GM18951 (cell line): ENCODE measurements at regions of chrX and their contacts with region 1.

Region 1: DNA sequence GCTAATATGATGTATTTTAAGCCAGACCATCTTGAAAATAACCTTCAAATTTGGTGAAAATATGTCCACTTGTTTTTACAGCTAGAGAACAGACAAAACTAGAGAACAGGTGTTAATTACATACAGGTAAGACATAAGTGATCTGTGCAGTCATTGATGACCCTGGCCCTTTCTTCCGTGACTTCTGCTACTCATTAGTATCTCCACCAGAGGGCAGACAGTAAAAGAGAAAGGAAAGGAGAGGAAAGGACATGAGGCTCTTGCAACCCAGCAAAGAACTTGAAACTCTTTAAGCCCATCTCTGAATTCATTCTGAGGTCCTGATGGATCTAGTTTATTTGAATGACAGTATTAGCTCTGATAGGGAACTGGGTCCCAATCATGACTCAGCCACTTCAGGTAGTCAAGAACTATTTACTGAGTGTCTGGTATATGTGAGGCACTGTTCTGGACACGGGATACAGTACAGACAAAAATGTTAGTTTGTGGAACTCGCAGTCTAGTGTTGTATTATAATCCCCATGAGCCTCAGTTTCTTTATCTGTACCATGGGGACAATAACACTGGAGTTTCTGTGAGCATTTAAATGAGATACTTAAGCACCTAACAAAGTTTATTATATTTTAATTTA is 121.0 kb upstream of the TEX13D start:
- POLR2A ChIP-seq: no peak

Region 2: GRCh38 chrX:123884809-123885408 is 326.5 kb before region 1 on chrX:
- in situ Hi-C with region 1: no loop called
- POLR2A ChIP-seq: no peak

Region 3: DNA sequence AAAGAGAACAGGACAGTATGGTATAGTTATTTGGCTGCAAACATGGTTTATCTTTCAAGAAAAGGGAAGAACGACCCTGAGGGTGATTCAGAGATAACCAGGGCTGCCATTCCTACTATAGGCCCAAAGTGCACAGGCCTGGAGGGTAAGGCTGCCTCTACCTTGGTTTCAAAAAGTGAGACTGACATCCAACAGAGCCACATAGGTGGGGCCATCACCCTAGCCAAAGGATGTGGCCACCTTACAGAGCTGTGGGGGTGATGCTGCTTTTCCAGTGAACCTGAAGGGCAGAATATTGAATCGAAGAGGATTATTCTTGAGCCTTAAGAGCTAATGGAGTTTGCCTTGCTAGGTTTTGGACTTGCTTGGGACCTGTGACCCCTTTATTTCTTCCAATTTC is 150.6 kb after region 1 on chrX:
- in situ Hi-C with region 1: loop called (anchors 10 kb)
- POLR2A ChIP-seq: no peak

Region 4: GRCh38 chrX:124747299-124747698 is 535.9 kb after region 1 on chrX:
- in situ Hi-C with region 1: no loop called
- POLR2A ChIP-seq: no peak